CD4-positive, alpha-beta T cell (primary cell): ENCODE measurements at regions of chr2 and their contacts with region 1.

Region 1: GRCh38 chr2:172458561-172459124 is 31.3 kb downstream of the ITGA6 start:
- DNase-seq: no peak
- ATAC-seq: no peak
- H3K4me3 ChIP-seq: no peak overlapping the region
- H3K4me3 Mint-ChIP-seq: peak overlapping the region; percentile 5
- H3K27ac ChIP-seq: peak overlapping the region; percentile 4 to 44
- H3K27ac Mint-ChIP-seq: peak overlapping the region; percentile 93
- H3K4me1 ChIP-seq: peaks cover 76% of the 10 kb centered on the region
- H3K4me1 Mint-ChIP-seq: peaks cover 93% of the 10 kb centered on the region
- H3K27me3 ChIP-seq: no peaks in the 10 kb centered on the region
- H3K27me3 Mint-ChIP-seq: no peaks in the 10 kb centered on the region
- CTCF ChIP-seq: no peak

Region 2: GRCh38 chr2:171615069-171615468 is 843.6 kb before region 1 on chr2:
- CTCF ChIA-PET with region 1: no interaction called
- POLR2A ChIA-PET with region 1: no interaction called
- intact Hi-C with region 1: no loop called
- DNase-seq: no peak
- ATAC-seq: no peak
- H3K4me3 ChIP-seq: no peak overlapping the region
- H3K4me3 Mint-ChIP-seq: no peak overlapping the region
- H3K27ac ChIP-seq: no peak overlapping the region
- H3K27ac Mint-ChIP-seq: no peak overlapping the region
- H3K4me1 ChIP-seq: no peaks in the 10 kb centered on the region
- H3K4me1 Mint-ChIP-seq: no peaks in the 10 kb centered on the region
- H3K27me3 ChIP-seq: no peaks in the 10 kb centered on the region
- H3K27me3 Mint-ChIP-seq: no peaks in the 10 kb centered on the region
- CTCF ChIP-seq: no peak

Region 3: DNA sequence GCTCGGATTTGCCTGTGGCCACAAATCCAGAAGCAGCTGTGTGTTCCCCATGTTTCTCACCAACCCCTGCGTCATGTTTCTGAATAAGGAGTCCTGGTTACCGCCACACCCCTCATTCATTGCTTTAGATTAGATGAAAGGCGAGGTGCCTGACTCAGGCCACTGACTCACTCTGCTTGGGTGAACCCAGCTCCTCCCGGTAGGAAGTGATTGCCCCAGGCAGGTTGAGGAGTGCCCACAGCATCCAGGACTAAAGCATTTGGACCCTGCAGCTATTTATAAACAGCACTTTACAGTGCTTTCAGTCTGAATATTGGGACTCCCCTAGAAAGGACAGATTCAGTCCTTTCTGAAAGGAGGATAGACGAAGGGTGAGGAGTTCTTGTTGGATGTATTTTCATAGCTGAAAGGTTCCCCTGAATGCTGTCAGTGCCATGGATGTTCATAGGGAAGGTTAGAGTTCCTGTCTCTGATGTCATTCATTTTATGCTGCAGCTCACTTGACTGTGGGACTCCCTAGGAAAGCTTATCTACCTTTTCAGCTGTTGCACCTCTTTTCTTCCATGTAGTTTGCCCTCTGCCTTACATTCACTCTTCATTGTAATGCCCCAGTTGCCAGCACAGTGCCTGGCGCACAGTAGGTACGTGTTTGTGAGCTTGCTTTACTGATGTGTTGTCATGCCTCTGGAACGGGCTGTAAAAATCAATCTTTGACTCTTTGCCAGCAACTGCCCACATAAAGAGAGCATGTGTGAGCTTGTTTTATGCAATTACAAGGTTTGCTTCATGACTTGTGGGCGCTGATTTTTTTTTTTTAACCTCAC is 16.4 kb before region 1 on chr2:
- CTCF ChIA-PET with region 1: interaction called, 187 read pairs
- POLR2A ChIA-PET with region 1: interaction called, 482 read pairs
- intact Hi-C with region 1: loop called (anchors 2 kb)
- DNase-seq: peak in 12 of 14 experiments; percentile 28 to 74 (median 46)
- ATAC-seq: peak; percentile 53
- H3K4me3 ChIP-seq: peak overlapping the region; percentile 31
- H3K4me3 Mint-ChIP-seq: peak overlapping the region; percentile 92
- H3K27ac ChIP-seq: no peak overlapping the region
- H3K27ac Mint-ChIP-seq: peak overlapping the region; percentile 89
- H3K4me1 ChIP-seq: peaks cover 66% of the 10 kb centered on the region
- H3K4me1 Mint-ChIP-seq: peaks cover 76% of the 10 kb centered on the region
- H3K27me3 ChIP-seq: no peaks in the 10 kb centered on the region
- H3K27me3 Mint-ChIP-seq: no peaks in the 10 kb centered on the region
- CTCF ChIP-seq: no peak

Region 4: DNA sequence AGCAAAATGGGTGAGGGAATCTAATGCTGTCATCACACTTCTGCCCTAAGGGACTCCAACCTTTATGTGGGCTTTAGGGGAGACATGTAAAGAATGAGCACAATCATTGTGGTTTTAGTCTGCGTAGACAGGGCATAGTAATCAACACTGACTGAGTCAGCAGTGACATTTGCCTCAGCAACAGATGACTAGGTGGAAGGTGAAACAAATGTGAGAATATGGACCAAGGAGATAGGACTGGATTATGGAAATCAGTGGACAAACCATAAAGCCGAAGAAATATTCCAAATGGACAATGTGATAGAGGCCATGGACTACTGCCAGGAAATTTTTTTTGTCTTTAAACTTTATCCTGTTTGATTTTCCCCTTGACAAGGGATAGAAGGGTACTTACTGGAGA is 181.2 kb after region 1 on chr2:
- CTCF ChIA-PET with region 1: no interaction called
- POLR2A ChIA-PET with region 1: no interaction called
- intact Hi-C with region 1: no loop called
- DNase-seq: no peak
- ATAC-seq: no peak
- H3K4me3 ChIP-seq: no peak overlapping the region
- H3K4me3 Mint-ChIP-seq: no peak overlapping the region
- H3K27ac ChIP-seq: no peak overlapping the region
- H3K27ac Mint-ChIP-seq: no peak overlapping the region
- H3K4me1 ChIP-seq: no peaks in the 10 kb centered on the region
- H3K4me1 Mint-ChIP-seq: peaks cover 4% of the 10 kb centered on the region
- H3K27me3 ChIP-seq: no peaks in the 10 kb centered on the region
- H3K27me3 Mint-ChIP-seq: no peaks in the 10 kb centered on the region
- CTCF ChIP-seq: no peak